ENCODE measurements at regions of chr9 and their contacts with region 1.

Region 1: DNA sequence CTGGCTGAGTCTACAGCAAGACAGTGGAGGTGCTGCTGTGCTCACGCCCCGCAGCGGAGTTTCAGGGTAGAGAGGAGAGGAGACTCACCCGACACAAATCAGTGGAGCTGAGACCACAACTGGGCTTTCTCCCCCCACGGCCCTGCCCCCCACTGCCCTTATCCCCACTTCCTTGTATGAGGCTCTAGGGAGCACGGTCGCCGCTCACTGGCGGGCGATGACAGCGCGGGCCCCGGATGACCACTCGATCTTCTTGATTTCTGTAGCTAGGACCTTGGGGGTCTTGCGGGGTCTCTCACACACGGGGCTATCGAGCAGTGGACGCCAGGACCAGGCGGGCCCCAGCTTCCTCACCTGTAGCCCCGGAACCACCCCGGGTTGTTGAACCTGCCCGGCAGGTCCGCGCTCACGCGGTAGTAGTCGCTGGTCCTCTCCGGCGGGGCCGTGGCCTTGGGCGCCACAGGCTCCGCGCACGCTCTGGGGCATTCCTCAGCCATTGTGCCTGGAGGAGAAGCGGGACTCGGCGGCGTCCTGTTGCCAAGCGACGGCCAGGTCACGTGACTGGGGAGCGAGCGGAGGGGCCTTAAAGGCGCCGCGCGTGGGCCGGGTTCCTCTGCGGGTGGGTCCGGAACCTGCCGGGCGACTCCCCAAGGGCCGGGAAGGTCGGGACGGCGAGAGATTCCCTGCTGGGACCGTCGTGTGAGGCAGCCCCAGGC is 969 bp upstream of the MRPS2 start:
- DNase-seq: peak; percentile 89
- ATAC-seq: peak; percentile 47
- H3K4me3 ChIP-seq: peak overlapping the region; percentile 80 to 94 (median 81)
- H3K4me3 Mint-ChIP-seq: peak overlapping the region; percentile 84
- H3K27ac ChIP-seq: no peak overlapping the region
- H3K27ac Mint-ChIP-seq: peak overlapping the region; percentile 73
- H3K4me1 ChIP-seq: peaks cover 14 to 29% of the 10 kb centered on the region in 2 donors
- H3K4me1 Mint-ChIP-seq: peaks cover 24% of the 10 kb centered on the region
- H3K27me3 ChIP-seq: peaks cover 0 to 10% (median 0%) of the 10 kb centered on the region in 4 experiments
- H3K27me3 Mint-ChIP-seq: no peaks in the 10 kb centered on the region
- CTCF ChIP-seq: no peak

Region 2: DNA sequence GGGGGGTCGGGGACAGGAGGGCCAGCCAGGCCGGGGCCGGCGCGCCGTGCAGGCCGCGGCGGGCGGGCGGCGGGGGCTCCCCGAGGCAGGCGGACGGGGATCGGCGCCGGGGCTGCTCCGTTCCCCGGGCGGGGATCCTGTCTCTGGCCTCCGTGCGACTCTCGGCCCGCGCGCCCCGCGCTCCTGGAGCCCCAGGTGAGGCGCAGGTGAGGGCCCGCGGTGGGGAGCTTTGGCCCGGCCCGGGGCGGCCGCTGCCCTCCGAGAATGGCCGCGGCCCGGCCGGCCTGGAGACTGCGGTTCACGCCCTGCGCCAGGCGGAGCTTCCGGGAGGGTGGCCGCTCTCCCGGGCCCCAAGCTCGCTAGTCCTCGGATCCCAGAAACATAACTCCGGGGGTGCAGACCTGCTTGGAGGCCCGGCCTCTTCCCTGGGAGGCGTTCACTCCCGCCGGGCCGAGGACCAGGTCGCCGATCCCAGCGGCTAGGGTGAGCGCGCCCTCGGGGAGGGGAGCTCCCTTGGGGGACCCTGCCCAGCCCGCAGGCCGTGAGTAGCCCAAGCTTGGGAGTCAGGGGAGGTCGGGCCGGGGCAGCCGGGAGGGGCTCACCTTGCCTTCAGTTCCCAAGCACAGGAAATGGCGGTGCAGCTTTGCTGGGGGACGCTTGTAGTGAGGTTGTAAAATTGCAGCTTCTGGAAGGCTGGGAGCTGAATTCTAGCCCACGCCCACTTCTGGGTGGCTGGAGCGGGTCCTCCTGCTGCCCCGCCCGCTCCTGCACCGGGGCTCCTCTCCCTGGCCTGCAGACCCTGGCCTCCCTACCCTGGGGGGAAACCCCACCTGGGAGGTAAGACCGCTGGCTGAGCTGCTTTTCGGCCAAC is 19.2 kb before region 1 on chr9:
- CTCF ChIA-PET with region 1: interaction called, 5 read pairs
- POLR2A ChIA-PET with region 1: interaction called, 4 read pairs
- intact Hi-C with region 1: loop called (anchors 2 kb)
- DNase-seq: peak; percentile 44
- ATAC-seq: peak; percentile 18
- H3K4me3 ChIP-seq: peak overlapping the region in 4 of 5 experiments; percentile 43 to 69 (median 63)
- H3K4me3 Mint-ChIP-seq: peak overlapping the region; percentile 71
- H3K27ac ChIP-seq: no peak overlapping the region
- H3K27ac Mint-ChIP-seq: no peak overlapping the region
- H3K4me1 ChIP-seq: peaks cover 10 to 15% of the 10 kb centered on the region in 2 donors
- H3K4me1 Mint-ChIP-seq: peaks cover 8% of the 10 kb centered on the region
- H3K27me3 ChIP-seq: peaks cover 0 to 32% (median 0%) of the 10 kb centered on the region in 4 experiments
- H3K27me3 Mint-ChIP-seq: peaks cover 7% of the 10 kb centered on the region
- CTCF ChIP-seq: no peak

Region 3: GRCh38 chr9:135830496-135830895 is 331.0 kb after region 1 on chr9:
- CTCF ChIA-PET with region 1: no interaction called
- POLR2A ChIA-PET with region 1: no interaction called
- intact Hi-C with region 1: no loop called
- DNase-seq: no peak
- ATAC-seq: no peak
- H3K4me3 ChIP-seq: no peak overlapping the region
- H3K4me3 Mint-ChIP-seq: no peak overlapping the region
- H3K27ac ChIP-seq: no peak overlapping the region
- H3K27ac Mint-ChIP-seq: no peak overlapping the region
- H3K4me1 ChIP-seq: no peaks in the 10 kb centered on the region
- H3K4me1 Mint-ChIP-seq: peaks cover 2% of the 10 kb centered on the region
- H3K27me3 ChIP-seq: no peaks in the 10 kb centered on the region
- H3K27me3 Mint-ChIP-seq: no peaks in the 10 kb centered on the region
- CTCF ChIP-seq: no peak

Measured in B cell (primary cell).